Ascending aorta (tissue), 2 donors: ENCODE measurements at regions of chr2 and their contacts with region 1.

Region 1: GRCh38 chr2:74833418-74834233 is at the start of gene HK2:
- DNase-seq: peak; percentile 54 to 91
- H3K4me3 ChIP-seq: peak within 1 kb of the TSS; percentile 71 to 81
- H3K27ac ChIP-seq: peak within 1 kb of the TSS; percentile 78 to 87
- H3K4me1 ChIP-seq: peaks cover 0 to 15% of the 10 kb centered on the region in 2 donors
- H3K27me3 ChIP-seq: no peaks in the 10 kb centered on the region
- CTCF ChIP-seq: no peak
- total RNA-seq, gene HK2: 6.8 TPM

Region 2: DNA sequence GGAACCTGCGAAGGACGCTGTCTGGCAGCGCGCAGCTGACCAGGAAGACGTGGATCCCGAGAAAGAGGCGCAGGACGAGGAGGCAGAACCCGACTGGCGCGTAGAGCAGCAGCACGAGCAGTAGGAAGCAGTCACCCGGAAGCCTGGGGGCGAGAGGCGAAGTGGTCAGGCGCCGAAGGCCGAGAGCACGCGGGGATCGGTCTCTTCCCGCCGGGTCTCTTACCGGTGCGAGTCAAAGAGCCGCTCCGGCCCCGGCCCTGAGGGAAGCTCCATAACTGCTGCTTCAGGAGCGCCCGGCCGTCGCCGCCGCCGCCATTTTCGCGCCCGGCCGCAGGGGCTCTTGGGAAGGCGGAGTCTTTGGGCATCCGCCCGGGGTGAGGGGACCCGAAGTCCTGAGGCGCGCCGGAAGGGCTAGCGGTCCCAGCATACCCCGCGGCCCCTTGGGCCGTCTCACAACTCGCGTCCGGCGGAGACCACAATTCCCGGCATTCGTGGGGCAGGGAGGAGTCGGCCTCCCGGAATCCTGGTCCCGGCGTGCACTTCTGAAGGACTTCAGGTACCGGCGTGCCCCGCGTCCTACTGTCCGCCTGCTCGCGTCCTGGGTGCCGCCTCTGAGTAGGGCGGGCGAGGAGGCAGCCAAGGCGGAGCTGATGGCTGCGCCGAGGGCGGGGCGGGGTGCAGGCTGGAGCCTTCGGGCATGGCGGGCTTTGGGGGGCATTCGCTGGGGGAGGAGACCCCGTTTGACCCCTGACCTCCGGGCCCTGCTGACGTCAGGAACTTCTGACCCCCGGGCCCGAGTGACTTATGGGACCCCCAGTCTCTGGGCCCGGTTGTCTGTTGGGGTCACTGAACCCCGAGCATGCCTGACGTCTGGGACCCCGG is 304.0 kb before region 1 on chr2 and contains the starts of genes AUP1 and HTRA2:
- intact Hi-C with region 1: no loop called
- DNase-seq: peak; percentile 95 to 99
- H3K4me3 ChIP-seq: peak within 1 kb of the TSS; percentile 78 to 85
- H3K27ac ChIP-seq: peak within 1 kb of the TSS; percentile 84 to 88
- H3K4me1 ChIP-seq: peaks cover 13 to 21% of the 10 kb centered on the region in 2 donors
- H3K27me3 ChIP-seq: no peaks in the 10 kb centered on the region
- CTCF ChIP-seq: peak in 1 of 3 experiments; percentile 18
- total RNA-seq, gene AUP1: 120 TPM
- total RNA-seq, gene HTRA2: 80.1 TPM

Region 3: GRCh38 chr2:74653985-74654882 is 179.4 kb before region 1 on chr2 and contains the start of gene SEMA4F:
- intact Hi-C with region 1: loop called (anchors 5 kb)
- DNase-seq: peak; percentile 86 to 98
- H3K4me3 ChIP-seq: peak within 1 kb of the TSS; percentile 81 to 95
- H3K27ac ChIP-seq: peak within 1 kb of the TSS; percentile 66 to 69
- H3K4me1 ChIP-seq: no peaks in the 10 kb centered on the region
- H3K27me3 ChIP-seq: no peaks in the 10 kb centered on the region
- CTCF ChIP-seq: no peak
- total RNA-seq, gene SEMA4F: 0.32 TPM

Region 4: GRCh38 chr2:74740389-74741075 is 93.1 kb before region 1 on chr2:
- intact Hi-C with region 1: loop called (anchors 2 kb)
- DNase-seq: peak; percentile 70 to 92
- H3K4me3 ChIP-seq: peak overlapping the region in 1 of 2 donors; percentile 17
- H3K27ac ChIP-seq: peak overlapping the region; percentile 70 to 75
- H3K4me1 ChIP-seq: peaks cover 0 to 12% of the 10 kb centered on the region in 2 donors
- H3K27me3 ChIP-seq: no peaks in the 10 kb centered on the region
- CTCF ChIP-seq: no peak

Region 5: GRCh38 chr2:74845217-74846011 is 11.8 kb after region 1 on chr2:
- intact Hi-C with region 1: loop called (anchors 1 kb)
- DNase-seq: peak; percentile 93 to 95
- H3K4me3 ChIP-seq: no peak overlapping the region
- H3K27ac ChIP-seq: peak overlapping the region; percentile 87 to 92
- H3K4me1 ChIP-seq: peaks cover 10 to 29% of the 10 kb centered on the region in 2 donors
- H3K27me3 ChIP-seq: no peaks in the 10 kb centered on the region
- CTCF ChIP-seq: no peak

Region 6: GRCh38 chr2:74876081-74876886 is 42.7 kb after region 1 on chr2:
- intact Hi-C with region 1: loop called (anchors 2 kb)
- DNase-seq: no peak
- H3K4me3 ChIP-seq: no peak overlapping the region
- H3K27ac ChIP-seq: peak overlapping the region in 1 of 2 donors; percentile 24
- H3K4me1 ChIP-seq: no peaks in the 10 kb centered on the region
- H3K27me3 ChIP-seq: no peaks in the 10 kb centered on the region
- CTCF ChIP-seq: peak; percentile 54 to 79 (median 59)

Region 7: GRCh38 chr2:75002007-75002406 is 168.4 kb after region 1 on chr2:
- intact Hi-C with region 1: no loop called
- DNase-seq: no peak
- H3K4me3 ChIP-seq: no peak overlapping the region
- H3K27ac ChIP-seq: no peak overlapping the region
- H3K4me1 ChIP-seq: no peaks in the 10 kb centered on the region
- H3K27me3 ChIP-seq: no peaks in the 10 kb centered on the region
- CTCF ChIP-seq: no peak